GM12878 (cell line): ENCODE measurements at regions of chr18 and their contacts with region 1.

Region 1: DNA sequence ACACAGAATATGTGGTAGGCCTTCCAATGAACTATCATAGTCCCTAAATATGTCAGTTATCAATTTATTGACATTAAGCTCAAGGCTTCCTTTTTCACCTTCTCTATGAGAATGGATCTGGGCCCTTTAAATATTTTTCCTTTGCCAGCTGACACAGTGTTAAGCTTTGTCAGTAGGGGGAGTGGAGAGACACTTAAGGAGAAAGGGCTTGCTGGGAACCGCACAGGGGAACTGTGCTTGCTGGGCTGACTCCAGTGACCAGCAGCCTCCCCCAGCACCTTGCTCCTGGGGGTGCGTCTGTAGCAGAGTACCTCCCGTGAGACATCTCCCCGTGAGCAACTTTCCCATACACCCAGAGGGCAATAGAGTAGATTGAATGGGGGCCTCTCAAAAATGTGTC is 6.5 kb upstream of the PTPN2 start:
- DNase-seq: no peak
- ATAC-seq: peak; percentile 57
- H3K4me3 ChIP-seq: no peak overlapping the region
- H3K27ac ChIP-seq: no peak overlapping the region
- H3K4me1 ChIP-seq: peaks cover 11% of the 10 kb centered on the region; the same call in 1 of the 2 replicates
- H3K27me3 ChIP-seq: peaks cover 0 to under 1% of the 10 kb centered on the region in 2 experiments; a peak in 1 of 4 replicates
- CTCF ChIP-seq: peak; percentile 14 to 32 (median 26); a peak in 3 of 6 replicates
- EP300 ChIP-seq: no peak
- POLR2A ChIP-seq: no peak
- RAD21 ChIP-seq: no peak

Region 2: GRCh38 chr18:12726774-12727550 is 163.5 kb before region 1 on chr18:
- CTCF ChIA-PET with region 1: interaction called, 68 read pairs
- POLR2A ChIA-PET with region 1: interaction called, 3 read pairs
- RAD21 ChIA-PET with region 1: interaction called, 8 read pairs
- SMC1A ChIA-PET with region 1: interaction called, 31 read pairs
- in situ Hi-C with region 1: loop called (anchors 5 kb)
- intact Hi-C with region 1: loop called (anchors 1 kb)
- DNase-seq: no peak
- ATAC-seq: peak; percentile 84
- H3K4me3 ChIP-seq: no peak overlapping the region
- H3K27ac ChIP-seq: no peak overlapping the region
- H3K4me1 ChIP-seq: no peaks in the 10 kb centered on the region
- H3K27me3 ChIP-seq: no peaks in the 10 kb centered on the region
- CTCF ChIP-seq: peak; percentile 82 to 84 (median 83)
- EP300 ChIP-seq: no peak
- POLR2A ChIP-seq: no peak; the same call in 1 of the 2 replicates
- RAD21 ChIP-seq: peak; percentile 84

Region 3: DNA sequence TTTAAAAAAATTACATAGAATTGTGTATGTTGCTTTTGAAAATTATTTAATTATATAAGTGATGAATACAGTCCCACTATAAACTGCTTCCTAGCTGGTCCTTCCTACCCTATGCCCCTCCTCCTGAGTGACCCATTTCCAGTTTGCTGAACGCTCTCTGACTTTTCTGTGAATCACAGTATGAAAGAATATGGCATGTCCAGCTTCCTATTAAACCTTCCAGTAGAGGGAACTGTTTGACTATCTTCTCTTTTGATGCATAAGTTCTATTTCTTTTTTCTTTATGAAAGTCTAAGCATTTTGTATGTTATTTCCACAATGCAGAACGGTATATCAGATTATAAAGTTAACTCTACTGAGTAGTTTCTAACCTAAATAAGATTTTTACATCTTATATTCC is 146.4 kb before region 1 on chr18:
- CTCF ChIA-PET with region 1: interaction called, 80 read pairs
- POLR2A ChIA-PET with region 1: interaction called, 4 read pairs
- RAD21 ChIA-PET with region 1: interaction called, 11 read pairs
- SMC1A ChIA-PET with region 1: interaction called, 46 read pairs
- in situ Hi-C with region 1: no loop called
- intact Hi-C with region 1: loop called (anchors 2 kb)
- DNase-seq: no peak
- ATAC-seq: peak; percentile 77
- H3K4me3 ChIP-seq: no peak overlapping the region
- H3K27ac ChIP-seq: no peak overlapping the region
- H3K4me1 ChIP-seq: no peaks in the 10 kb centered on the region
- H3K27me3 ChIP-seq: no peaks in the 10 kb centered on the region
- CTCF ChIP-seq: peak; percentile 25 to 62 (median 53); a peak in 5 of 6 replicates
- EP300 ChIP-seq: no peak
- POLR2A ChIP-seq: no peak
- RAD21 ChIP-seq: peak; percentile 87

Region 4: GRCh38 chr18:12843420-12844350 is 46.8 kb before region 1 on chr18:
- CTCF ChIA-PET with region 1: interaction called, 13 read pairs
- POLR2A ChIA-PET with region 1: interaction called, 62 read pairs
- RAD21 ChIA-PET with region 1: interaction called, 81 read pairs
- SMC1A ChIA-PET with region 1: interaction called, 33 read pairs
- in situ Hi-C with region 1: no loop called
- intact Hi-C with region 1: no loop called
- DNase-seq: no peak
- ATAC-seq: peak; percentile 12; the same call in 2 of the 3 replicates
- H3K4me3 ChIP-seq: no peak overlapping the region
- H3K27ac ChIP-seq: peak overlapping the region; percentile 71
- H3K4me1 ChIP-seq: peaks cover 35% of the 10 kb centered on the region
- H3K27me3 ChIP-seq: no peaks in the 10 kb centered on the region
- CTCF ChIP-seq: no peak
- EP300 ChIP-seq: no peak
- POLR2A ChIP-seq: no peak
- RAD21 ChIP-seq: no peak

Region 5: GRCh38 chr18:12960853-12961397 is 70.4 kb after region 1 on chr18:
- CTCF ChIA-PET with region 1: no interaction called
- POLR2A ChIA-PET with region 1: no interaction called
- RAD21 ChIA-PET with region 1: no interaction called
- SMC1A ChIA-PET with region 1: no interaction called
- in situ Hi-C with region 1: no loop called
- intact Hi-C with region 1: no loop called
- DNase-seq: no peak
- ATAC-seq: no peak
- H3K4me3 ChIP-seq: no peak overlapping the region
- H3K27ac ChIP-seq: no peak overlapping the region
- H3K4me1 ChIP-seq: no peaks in the 10 kb centered on the region
- H3K27me3 ChIP-seq: no peaks in the 10 kb centered on the region
- CTCF ChIP-seq: no peak
- EP300 ChIP-seq: no peak
- POLR2A ChIP-seq: no peak
- RAD21 ChIP-seq: no peak